Spleen (tissue), 13 donors: ENCODE measurements at regions of chrX and their contacts with region 1.

Region 1: GRCh38 chrX:27555514-27555913 is 34.6 kb upstream of the DCAF8L2 start:
- DNase-seq: no peak
- H3K4me3 ChIP-seq: no peak overlapping the region
- H3K27ac ChIP-seq: no peak overlapping the region
- H3K4me1 ChIP-seq: no peaks in the 10 kb centered on the region
- H3K27me3 ChIP-seq: no peaks in the 10 kb centered on the region
- CTCF ChIP-seq: no peak
- POLR2A ChIP-seq: no peak

Region 2: GRCh38 chrX:26999634-27000033 is 555.9 kb before region 1 on chrX:
- intact Hi-C with region 1: no loop called
- DNase-seq: no peak
- H3K4me3 ChIP-seq: no peak overlapping the region
- H3K27ac ChIP-seq: no peak overlapping the region
- H3K4me1 ChIP-seq: no peaks in the 10 kb centered on the region
- H3K27me3 ChIP-seq: no peaks in the 10 kb centered on the region
- CTCF ChIP-seq: no peak
- POLR2A ChIP-seq: no peak

Region 3: DNA sequence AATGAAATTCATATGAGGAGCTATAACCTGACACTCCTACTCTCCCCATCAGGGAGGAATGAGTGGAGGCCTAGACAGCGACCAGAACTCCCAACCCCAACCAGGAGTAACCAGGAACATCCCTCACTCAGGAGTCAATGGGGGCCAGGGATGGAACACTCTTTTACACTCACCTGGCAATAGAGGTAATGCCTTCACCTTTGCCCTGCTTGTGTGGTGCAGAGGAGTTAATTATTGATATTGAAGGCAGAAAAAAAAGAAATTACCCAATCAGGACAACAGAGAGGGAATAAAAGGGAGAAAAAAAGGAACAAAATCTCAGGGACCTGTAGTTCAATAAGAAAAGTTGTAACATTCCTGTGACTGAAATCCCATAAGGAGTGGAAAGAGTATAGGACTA is 233.9 kb before region 1 on chrX:
- intact Hi-C with region 1: no loop called
- DNase-seq: no peak
- H3K4me3 ChIP-seq: no peak overlapping the region
- H3K27ac ChIP-seq: no peak overlapping the region
- H3K4me1 ChIP-seq: no peaks in the 10 kb centered on the region
- H3K27me3 ChIP-seq: no peaks in the 10 kb centered on the region
- CTCF ChIP-seq: no peak
- POLR2A ChIP-seq: no peak

Region 4: GRCh38 chrX:27391623-27392022 is 163.9 kb before region 1 on chrX:
- intact Hi-C with region 1: no loop called
- DNase-seq: no peak
- H3K4me3 ChIP-seq: no peak overlapping the region
- H3K27ac ChIP-seq: no peak overlapping the region
- H3K4me1 ChIP-seq: no peaks in the 10 kb centered on the region
- H3K27me3 ChIP-seq: no peaks in the 10 kb centered on the region
- CTCF ChIP-seq: no peak
- POLR2A ChIP-seq: no peak

Region 5: GRCh38 chrX:27491397-27491796 is 64.1 kb before region 1 on chrX:
- intact Hi-C with region 1: loop called (anchors 10 kb)
- DNase-seq: no peak
- H3K4me3 ChIP-seq: no peak overlapping the region
- H3K27ac ChIP-seq: no peak overlapping the region
- H3K4me1 ChIP-seq: no peaks in the 10 kb centered on the region
- H3K27me3 ChIP-seq: no peaks in the 10 kb centered on the region
- CTCF ChIP-seq: no peak
- POLR2A ChIP-seq: no peak